Breast epithelium (tissue), 4 donors: ENCODE measurements at regions of chr7 and their contacts with region 1.

Region 1: DNA sequence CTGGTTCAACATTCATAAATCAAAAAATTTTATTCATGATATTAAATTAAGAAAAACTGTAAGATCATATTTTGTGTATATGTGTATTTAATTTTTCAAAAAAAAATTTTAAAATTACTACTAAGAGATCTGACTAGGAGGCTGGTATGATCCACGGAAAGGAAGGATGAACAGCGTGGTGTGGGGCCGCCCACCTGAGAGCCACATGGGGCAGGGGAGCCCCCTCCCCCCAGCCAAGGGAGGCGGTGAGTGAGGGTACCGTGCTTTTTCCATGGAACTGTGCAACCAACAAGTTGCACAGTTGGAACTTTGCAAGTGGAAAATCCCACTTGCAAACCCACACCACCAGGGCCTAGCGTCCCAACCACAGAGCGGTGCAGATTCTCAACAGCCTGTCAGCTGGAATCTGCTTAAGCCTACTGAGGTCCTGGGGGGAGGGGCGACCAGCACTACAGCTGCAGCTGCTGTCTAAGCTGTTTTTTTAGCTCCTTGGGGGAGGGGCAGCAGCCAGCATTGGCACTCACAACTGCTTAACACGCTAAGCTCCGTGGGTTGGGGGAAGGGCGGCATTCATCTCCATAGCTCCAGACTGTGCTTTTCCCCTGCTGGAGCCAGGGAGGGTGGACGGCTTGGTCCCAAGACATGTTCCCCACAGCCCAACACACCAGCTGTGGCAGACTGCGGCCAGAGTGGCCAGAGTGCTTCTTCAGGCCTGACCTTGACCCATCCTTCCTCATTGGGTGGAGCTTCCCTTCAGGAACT is 94.2 kb upstream of the IGFBP3 start:
- DNase-seq: no peak
- H3K4me3 ChIP-seq: no peak overlapping the region
- H3K27ac ChIP-seq: no peak overlapping the region
- H3K4me1 ChIP-seq: no peaks in the 10 kb centered on the region
- H3K27me3 ChIP-seq: no peaks in the 10 kb centered on the region
- CTCF ChIP-seq: no peak
- POLR2A ChIP-seq: no peak

Region 2: DNA sequence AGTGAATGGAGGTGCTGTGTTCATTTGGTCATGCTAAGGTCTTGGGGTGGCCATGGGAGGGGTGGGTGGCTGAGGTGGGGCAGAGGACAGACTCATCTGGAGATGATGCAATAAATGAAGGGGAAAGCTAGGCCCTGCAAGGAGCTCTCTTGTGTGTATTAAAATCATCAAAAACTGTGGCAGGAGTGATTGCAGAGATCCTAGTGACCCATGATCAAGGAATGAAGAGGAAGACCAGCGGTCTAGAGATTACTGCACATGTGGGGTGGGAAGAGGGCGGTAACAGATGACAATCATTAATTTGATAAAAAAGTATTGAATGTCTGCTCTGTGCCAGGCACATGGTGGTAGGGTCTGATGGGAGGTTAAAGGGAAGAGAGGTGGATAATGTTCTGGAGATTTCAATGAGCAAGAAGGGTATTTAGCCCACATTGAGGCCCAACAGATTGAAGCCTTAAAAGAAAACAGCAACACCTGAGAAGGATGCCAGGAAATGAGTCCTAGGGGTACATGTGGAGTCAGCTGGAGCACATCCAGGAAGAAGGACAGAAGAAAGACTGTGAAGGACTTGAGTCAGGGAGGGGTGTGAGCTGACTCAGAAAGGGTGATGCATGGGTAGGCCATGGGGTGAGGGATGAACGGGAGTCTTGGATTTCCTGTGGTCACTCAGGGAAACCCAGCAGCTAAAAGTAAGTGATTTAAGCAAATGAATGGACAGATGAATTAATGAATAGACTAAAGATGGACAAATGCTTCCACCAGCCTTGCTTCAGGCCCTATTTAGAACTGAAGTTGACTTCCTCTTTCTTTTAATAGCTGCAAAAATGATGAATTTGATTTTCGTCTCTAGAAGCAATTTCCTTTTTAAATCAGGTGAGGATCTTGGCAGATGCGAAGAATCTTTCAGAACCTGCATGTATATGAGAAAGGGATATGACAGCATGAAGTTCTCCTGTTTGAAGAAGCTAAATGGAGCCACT is 11.1 kb before region 1 on chr7:
- intact Hi-C with region 1: loop called (anchors 2 kb)
- DNase-seq: no peak
- H3K4me3 ChIP-seq: no peak overlapping the region
- H3K27ac ChIP-seq: no peak overlapping the region
- H3K4me1 ChIP-seq: no peaks in the 10 kb centered on the region
- H3K27me3 ChIP-seq: no peaks in the 10 kb centered on the region
- CTCF ChIP-seq: no peak
- POLR2A ChIP-seq: no peak

Region 3: DNA sequence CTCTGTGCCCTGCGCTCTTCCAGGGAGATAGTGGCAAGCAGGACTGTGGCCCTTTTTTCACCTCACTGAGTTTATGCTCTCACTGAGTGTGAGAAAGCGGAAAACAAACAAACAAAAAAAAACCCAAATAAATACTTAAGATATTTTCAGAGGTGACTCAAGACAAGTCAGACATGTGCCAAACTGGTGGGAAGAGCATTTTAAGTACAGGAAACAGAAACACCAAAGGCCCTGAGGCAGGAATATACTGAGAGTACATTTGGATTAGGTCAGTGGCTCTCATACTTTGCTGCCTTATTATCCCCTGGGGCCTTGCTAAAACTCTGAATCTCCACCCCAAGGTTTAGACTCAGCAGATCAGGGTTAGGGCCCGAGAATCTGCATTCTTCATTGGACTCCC is 17.7 kb after region 1 on chr7:
- intact Hi-C with region 1: no loop called
- DNase-seq: no peak
- H3K4me3 ChIP-seq: no peak overlapping the region
- H3K27ac ChIP-seq: no peak overlapping the region
- H3K4me1 ChIP-seq: no peaks in the 10 kb centered on the region
- H3K27me3 ChIP-seq: no peaks in the 10 kb centered on the region
- CTCF ChIP-seq: no peak
- POLR2A ChIP-seq: no peak